Activated CD8-positive, alpha-beta T cell treated with anti-CD3 and anti-CD28 coated beads for 36 hours (primary cell): ENCODE measurements at regions of chr14 and their contacts with region 1.

Region 1: GRCh38 chr14:50773632-50774541 is 57.1 kb downstream of the NIN start:
- DNase-seq: peak; percentile 59
- ATAC-seq: peak; percentile 73
- H3K4me3 Mint-ChIP-seq: no peak overlapping the region
- H3K27ac Mint-ChIP-seq: peak overlapping the region; percentile 36
- H3K4me1 Mint-ChIP-seq: peaks cover 34% of the 10 kb centered on the region
- H3K27me3 Mint-ChIP-seq: no peaks in the 10 kb centered on the region
- CTCF ChIP-seq: peak; percentile 87

Region 2: DNA sequence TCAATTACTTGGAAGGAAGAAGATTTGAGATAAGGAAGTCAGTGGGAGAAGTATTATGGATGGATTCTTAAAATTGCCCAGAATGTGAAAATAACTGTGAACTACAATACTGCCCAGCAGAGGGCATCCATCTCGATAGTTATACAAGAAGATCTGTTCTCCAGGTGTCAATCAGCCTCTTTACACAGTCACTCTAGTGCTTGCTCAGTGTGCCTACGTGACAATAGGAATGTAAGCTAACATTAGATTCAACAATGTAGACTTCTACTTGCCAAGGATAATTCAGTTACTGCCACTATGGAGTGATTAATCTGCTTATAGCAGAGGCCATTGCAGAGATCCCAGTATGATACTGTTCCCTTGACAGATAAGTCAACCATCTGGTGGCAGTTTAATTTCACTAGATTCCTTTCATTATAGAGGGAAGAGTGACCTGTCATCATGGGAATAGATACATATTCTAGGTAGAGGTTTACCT is 230.9 kb before region 1 on chr14:
- CTCF ChIA-PET with region 1: interaction called, 80 read pairs
- POLR2A ChIA-PET with region 1: interaction called, 3 read pairs
- intact Hi-C with region 1: no loop called
- DNase-seq: peak; percentile 68
- ATAC-seq: peak; percentile 95
- H3K4me3 Mint-ChIP-seq: no peak overlapping the region
- H3K27ac Mint-ChIP-seq: peak overlapping the region; percentile 64
- H3K4me1 Mint-ChIP-seq: peaks cover 17% of the 10 kb centered on the region
- H3K27me3 Mint-ChIP-seq: peaks cover 1% of the 10 kb centered on the region
- CTCF ChIP-seq: peak; percentile 82

Region 3: GRCh38 chr14:50619556-50620141 is 154.2 kb before region 1 on chr14:
- CTCF ChIA-PET with region 1: interaction called, 39 read pairs
- POLR2A ChIA-PET with region 1: no interaction called
- intact Hi-C with region 1: no loop called
- DNase-seq: no peak
- ATAC-seq: peak; percentile 53
- H3K4me3 Mint-ChIP-seq: no peak overlapping the region
- H3K27ac Mint-ChIP-seq: no peak overlapping the region
- H3K4me1 Mint-ChIP-seq: peaks cover 3% of the 10 kb centered on the region
- H3K27me3 Mint-ChIP-seq: no peaks in the 10 kb centered on the region
- CTCF ChIP-seq: peak; percentile 31

Region 4: DNA sequence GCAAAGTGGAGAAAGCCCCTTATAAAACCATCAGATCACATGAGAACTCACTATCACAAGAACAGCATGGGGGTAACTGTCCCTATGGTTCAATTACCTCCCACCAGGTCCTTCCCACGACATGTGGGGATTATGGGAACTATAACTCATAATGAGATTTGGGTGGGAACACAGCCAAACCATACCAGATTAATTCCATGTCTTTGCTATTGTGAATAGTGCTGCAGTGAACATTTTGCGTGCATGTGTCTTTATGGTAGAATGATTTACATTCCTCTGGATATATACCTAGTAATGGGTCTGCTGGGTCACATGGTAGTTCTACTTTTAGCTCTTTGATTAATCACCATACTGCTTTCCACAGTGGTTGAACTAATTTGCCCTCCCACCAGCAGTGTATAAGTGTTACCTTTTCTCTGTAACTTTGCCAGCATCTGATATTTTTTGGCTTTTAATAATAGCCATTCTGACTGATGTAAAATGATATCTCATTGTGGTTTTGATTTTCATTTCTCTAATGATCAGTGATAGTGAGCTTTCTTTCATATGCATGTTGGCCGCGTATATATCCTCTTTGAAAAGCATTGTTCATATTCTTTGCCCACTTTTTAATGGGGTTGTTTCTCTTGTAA is 76.1 kb before region 1 on chr14:
- CTCF ChIA-PET with region 1: no interaction called
- POLR2A ChIA-PET with region 1: no interaction called
- intact Hi-C with region 1: no loop called
- DNase-seq: no peak
- ATAC-seq: no peak
- H3K4me3 Mint-ChIP-seq: no peak overlapping the region
- H3K27ac Mint-ChIP-seq: no peak overlapping the region
- H3K4me1 Mint-ChIP-seq: no peaks in the 10 kb centered on the region
- H3K27me3 Mint-ChIP-seq: peaks cover 14% of the 10 kb centered on the region
- CTCF ChIP-seq: no peak

Region 5: DNA sequence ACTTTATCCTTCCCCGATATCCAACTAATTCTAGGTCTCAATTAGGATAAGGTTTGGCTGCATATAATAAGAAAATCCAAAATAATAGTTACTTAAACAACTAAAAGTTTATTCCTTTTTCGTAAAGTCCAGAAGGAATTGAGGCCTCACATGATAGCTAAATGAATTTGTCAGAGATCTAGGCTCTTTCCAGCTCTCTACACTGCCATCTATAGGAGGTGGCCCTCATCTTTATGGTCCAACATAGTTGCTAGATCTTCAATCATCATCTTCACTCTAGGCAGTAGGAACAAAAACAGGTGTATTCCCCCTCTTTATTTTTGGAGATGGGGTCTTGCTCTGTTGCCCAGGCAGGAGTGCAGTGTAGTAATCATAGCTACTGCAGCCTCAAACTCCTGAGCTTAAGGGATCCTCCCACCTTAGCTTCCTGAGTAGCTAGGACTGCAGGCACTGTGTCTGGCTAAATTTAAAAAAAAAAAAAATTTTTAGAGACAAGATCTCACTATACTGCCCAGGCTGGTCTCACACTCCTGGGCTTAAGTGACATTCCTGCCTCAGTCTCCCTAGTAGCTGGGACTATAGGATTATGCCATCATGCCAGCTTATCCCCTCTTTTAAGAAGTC is 59.3 kb before region 1 on chr14:
- CTCF ChIA-PET with region 1: interaction called, 27 read pairs
- POLR2A ChIA-PET with region 1: no interaction called
- intact Hi-C with region 1: no loop called
- DNase-seq: peak; percentile 13
- ATAC-seq: peak; percentile 74
- H3K4me3 Mint-ChIP-seq: no peak overlapping the region
- H3K27ac Mint-ChIP-seq: no peak overlapping the region
- H3K4me1 Mint-ChIP-seq: no peaks in the 10 kb centered on the region
- H3K27me3 Mint-ChIP-seq: no peaks in the 10 kb centered on the region
- CTCF ChIP-seq: peak; percentile 42

Region 6: GRCh38 chr14:50785457-50786063 is 11.7 kb after region 1 on chr14:
- CTCF ChIA-PET with region 1: interaction called, 103 read pairs
- POLR2A ChIA-PET with region 1: interaction called, 3 read pairs
- intact Hi-C with region 1: no loop called
- DNase-seq: no peak
- ATAC-seq: no peak
- H3K4me3 Mint-ChIP-seq: no peak overlapping the region
- H3K27ac Mint-ChIP-seq: peak overlapping the region; percentile 77
- H3K4me1 Mint-ChIP-seq: peaks cover 89% of the 10 kb centered on the region
- H3K27me3 Mint-ChIP-seq: no peaks in the 10 kb centered on the region
- CTCF ChIP-seq: no peak

Region 7: DNA sequence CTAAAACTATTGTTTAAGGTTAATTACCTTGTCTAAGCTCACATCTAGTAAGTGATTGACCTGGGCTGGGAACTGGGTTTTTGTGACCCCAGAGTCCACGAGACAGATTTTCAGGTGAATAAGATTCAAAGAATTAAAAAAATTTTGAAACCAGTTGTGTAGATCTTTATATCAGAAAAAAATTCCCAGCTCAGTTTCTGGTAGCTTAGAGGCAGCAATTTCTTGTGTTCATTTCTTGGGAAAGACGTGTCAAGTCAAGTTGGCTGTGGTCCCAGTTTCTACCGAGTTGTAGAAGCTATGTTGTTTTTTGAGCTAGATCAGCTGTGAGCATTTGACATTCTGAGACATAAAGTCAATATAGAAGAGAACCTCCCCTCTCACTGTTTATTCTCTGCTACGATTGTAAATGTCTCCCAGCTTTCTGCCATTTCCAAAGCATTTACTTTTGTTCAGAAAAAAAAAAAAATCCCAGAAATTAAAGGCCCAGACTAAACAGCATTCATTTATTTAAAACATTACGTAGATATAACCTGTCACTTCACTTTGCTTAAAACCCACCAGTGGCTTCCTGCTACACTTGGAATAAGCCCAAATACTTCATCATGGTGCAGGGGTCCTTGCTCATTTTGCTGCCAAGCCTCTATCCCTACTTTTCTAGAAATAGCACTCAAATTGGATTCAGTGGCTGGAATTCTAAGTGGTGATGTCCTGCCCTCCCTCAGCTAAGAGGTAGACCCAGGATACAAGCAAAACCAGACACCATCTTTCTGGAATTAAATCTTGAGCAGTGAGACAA is 190.9 kb after region 1 on chr14:
- CTCF ChIA-PET with region 1: no interaction called
- POLR2A ChIA-PET with region 1: no interaction called
- intact Hi-C with region 1: no loop called
- DNase-seq: no peak
- ATAC-seq: no peak
- H3K4me3 Mint-ChIP-seq: no peak overlapping the region
- H3K27ac Mint-ChIP-seq: no peak overlapping the region
- H3K4me1 Mint-ChIP-seq: no peaks in the 10 kb centered on the region
- H3K27me3 Mint-ChIP-seq: no peaks in the 10 kb centered on the region
- CTCF ChIP-seq: no peak

Region 8: DNA sequence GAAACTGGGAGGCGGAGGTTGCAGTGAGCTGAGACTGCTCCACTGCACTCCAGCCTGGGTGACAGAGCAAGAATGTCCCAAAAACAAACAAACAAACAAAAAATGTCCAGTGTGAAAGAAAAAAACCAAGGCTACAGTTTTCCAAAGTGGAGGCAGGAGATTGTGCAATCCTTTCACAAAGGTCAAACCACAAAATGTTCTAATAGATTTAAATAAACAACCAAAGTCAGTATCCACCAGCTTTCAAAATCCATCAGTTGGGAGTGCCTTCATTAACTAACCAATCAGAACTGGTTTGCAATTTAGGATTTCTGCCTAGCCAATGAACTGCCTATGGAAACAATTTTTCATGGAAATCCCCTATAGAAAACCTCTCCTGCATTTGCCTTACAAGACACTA is 373.3 kb after region 1 on chr14:
- CTCF ChIA-PET with region 1: no interaction called
- POLR2A ChIA-PET with region 1: no interaction called
- intact Hi-C with region 1: no loop called
- DNase-seq: no peak
- ATAC-seq: no peak
- H3K4me3 Mint-ChIP-seq: no peak overlapping the region
- H3K27ac Mint-ChIP-seq: no peak overlapping the region
- H3K4me1 Mint-ChIP-seq: no peaks in the 10 kb centered on the region
- H3K27me3 Mint-ChIP-seq: peaks cover 2% of the 10 kb centered on the region
- CTCF ChIP-seq: no peak